Ovary (tissue), 10 donors: ENCODE measurements at regions of chr2 and their contacts with region 1.

Region 1: GRCh38 chr2:240913810-240914644 is 7.9 kb downstream of the CROCC2 start:
- DNase-seq: peak; percentile 81 to 94 (median 91)
- H3K4me3 ChIP-seq: no peak overlapping the region
- H3K27ac ChIP-seq: peak overlapping the region in 1 of 2 donors; percentile 13
- H3K4me1 ChIP-seq: peaks cover 25% of the 10 kb centered on the region
- H3K27me3 ChIP-seq: no peaks in the 10 kb centered on the region
- CTCF ChIP-seq: peak; percentile 71 to 93 (median 89)
- EP300 ChIP-seq: no peak
- POLR2A ChIP-seq: no peak

Region 2: GRCh38 chr2:240998120-240998994 is 84.3 kb after region 1 on chr2 and contains the start of gene SNED1:
- intact Hi-C with region 1: loop called in 3 of 4 experiments (anchors 5 to 10 kb)
- DNase-seq: peak; percentile 88 to 94 (median 91)
- H3K4me3 ChIP-seq: peak within 1 kb of the TSS; percentile 53
- H3K27ac ChIP-seq: peak within 1 kb of the TSS; percentile 66 to 71
- H3K4me1 ChIP-seq: peaks cover 52% of the 10 kb centered on the region
- H3K27me3 ChIP-seq: no peaks in the 10 kb centered on the region
- CTCF ChIP-seq: peak in 1 of 3 donors; percentile 7
- EP300 ChIP-seq: no peak
- POLR2A ChIP-seq: peak; percentile 46
- total RNA-seq, gene SNED1: 32.7 to 69.5 (median 50.3) TPM

Region 3: DNA sequence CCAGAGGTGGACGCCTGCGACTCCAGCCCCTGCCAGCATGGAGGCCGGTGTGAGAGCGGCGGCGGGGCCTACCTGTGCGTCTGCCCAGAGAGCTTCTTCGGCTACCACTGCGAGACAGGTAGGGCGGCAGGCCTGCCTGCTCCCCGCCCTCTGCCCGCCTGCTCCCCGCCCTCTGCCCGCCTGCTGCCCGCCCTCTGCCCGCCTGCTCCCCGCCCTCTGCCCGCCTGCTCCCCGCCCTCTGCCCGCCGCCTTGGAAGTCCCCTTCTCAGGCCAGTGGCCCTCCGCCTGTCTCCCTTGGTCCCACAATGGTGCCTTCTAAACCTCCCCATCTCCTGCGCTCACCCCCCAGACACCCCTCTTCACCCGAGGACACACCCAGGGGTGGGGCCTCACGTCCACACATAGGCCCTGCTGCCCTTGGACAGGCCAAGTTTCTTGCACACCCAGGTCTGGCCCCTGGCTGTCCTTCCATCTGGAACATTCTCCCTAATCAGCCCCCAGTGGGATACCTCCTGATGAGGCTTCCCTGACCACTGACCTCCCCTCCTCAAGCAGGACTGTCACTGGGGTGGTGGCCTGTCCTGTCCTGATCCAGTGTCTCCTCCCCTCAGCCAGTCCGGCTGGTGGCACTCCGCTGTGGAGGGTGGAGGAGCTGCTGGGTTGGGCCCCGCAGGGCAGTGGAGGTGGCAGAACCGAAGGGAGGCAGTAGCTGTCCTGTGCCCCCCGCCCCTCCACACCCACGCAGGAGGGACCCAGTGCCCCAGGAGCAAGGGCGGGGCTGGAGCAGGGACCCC is 150.2 kb after region 1 on chr2:
- intact Hi-C with region 1: loop called in 1 of 4 experiments (anchors 5 kb)
- DNase-seq: peak in 3 of 5 donors; percentile 19 to 46 (median 26)
- H3K4me3 ChIP-seq: no peak overlapping the region
- H3K27ac ChIP-seq: no peak overlapping the region
- H3K4me1 ChIP-seq: peaks cover 2% of the 10 kb centered on the region
- H3K27me3 ChIP-seq: no peaks in the 10 kb centered on the region
- CTCF ChIP-seq: no peak
- EP300 ChIP-seq: no peak
- POLR2A ChIP-seq: no peak

Region 4: GRCh38 chr2:241692448-241692847 is 778.4 kb after region 1 on chr2:
- intact Hi-C with region 1: no loop called
- DNase-seq: no peak
- H3K4me3 ChIP-seq: no peak overlapping the region
- H3K27ac ChIP-seq: no peak overlapping the region
- H3K4me1 ChIP-seq: no peaks in the 10 kb centered on the region
- H3K27me3 ChIP-seq: no peaks in the 10 kb centered on the region
- CTCF ChIP-seq: no peak
- EP300 ChIP-seq: no peak
- POLR2A ChIP-seq: no peak